H1 (cell line): ENCODE measurements at regions of chr7 and their contacts with region 1.

Region 1: GRCh38 chr7:135509903-135510602 is at the start of gene CNOT4:
- DNase-seq: peak; percentile 89
- H3K4me3 ChIP-seq: peak within 1 kb of the TSS; percentile 77 to 96 (median 92)
- H3K27ac ChIP-seq: peak within 1 kb of the TSS; percentile 96
- H3K4me1 ChIP-seq: peaks cover 0 to 2% (median 0%) of the 10 kb centered on the region in 4 experiments; a peak in 1 of 7 replicates
- H3K27me3 ChIP-seq: no peaks in the 10 kb centered on the region
- CTCF ChIP-seq: peak in 1 of 3 experiments; percentile 1; a peak in 1 of 4 replicates
- EP300 ChIP-seq: no peak; a peak in 1 of 3 replicates
- POLR2A ChIP-seq: peak; percentile 92 to 94
- RAD21 ChIP-seq: no peak
- total RNA-seq, gene CNOT4: 24.3 and 25.8 TPM in 2 replicates

Region 2: DNA sequence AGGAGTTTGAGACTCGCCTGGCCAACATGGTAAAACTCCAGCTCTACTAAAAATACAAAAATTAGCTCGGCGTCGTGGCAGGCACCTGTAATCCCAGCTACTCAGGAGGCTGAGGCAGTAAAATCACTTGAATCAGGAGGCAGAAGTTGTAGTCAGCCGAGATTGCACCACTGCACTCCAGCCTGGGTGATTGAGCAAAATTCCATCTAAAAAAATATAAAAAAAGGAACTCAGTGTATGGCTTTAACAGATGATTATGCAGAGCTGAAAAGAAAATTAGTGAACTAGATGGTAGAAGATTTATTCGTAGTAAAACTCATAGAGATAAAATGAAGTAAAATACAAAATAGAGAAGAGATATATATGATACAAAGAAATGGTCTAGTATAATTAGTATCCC is 12.5 kb after region 1 on chr7:
- CTCF ChIA-PET with region 1: interaction called, 12 read pairs
- POLR2A ChIA-PET with region 1: interaction called, 5 read pairs
- DNase-seq: no peak
- H3K4me3 ChIP-seq: no peak overlapping the region
- H3K27ac ChIP-seq: no peak overlapping the region
- H3K4me1 ChIP-seq: no peaks in the 10 kb centered on the region
- H3K27me3 ChIP-seq: no peaks in the 10 kb centered on the region
- CTCF ChIP-seq: no peak
- EP300 ChIP-seq: no peak
- POLR2A ChIP-seq: no peak
- RAD21 ChIP-seq: no peak

Region 3: DNA sequence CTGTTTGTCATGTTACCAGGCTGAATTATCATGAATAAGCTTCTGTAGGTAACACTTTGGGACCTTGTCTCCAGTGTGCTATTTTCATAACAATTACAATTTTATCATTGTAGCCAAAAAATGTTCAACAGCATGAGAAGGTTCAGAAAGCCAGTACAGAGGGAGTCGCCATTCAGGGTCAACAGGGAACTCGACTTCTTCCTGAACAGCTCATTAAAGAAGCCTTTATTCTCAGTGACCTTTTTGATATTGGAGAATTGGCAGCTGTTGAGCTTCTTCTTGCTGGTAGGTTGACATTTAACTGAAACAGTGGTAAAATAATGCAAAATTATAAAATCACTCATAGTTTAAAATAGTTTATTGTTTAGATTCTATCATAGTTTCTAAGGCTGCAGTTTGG is 63.5 kb after region 1 on chr7:
- CTCF ChIA-PET with region 1: interaction called, 10 read pairs
- POLR2A ChIA-PET with region 1: interaction called, 4 read pairs
- DNase-seq: no peak
- H3K4me3 ChIP-seq: no peak overlapping the region
- H3K27ac ChIP-seq: no peak overlapping the region
- H3K4me1 ChIP-seq: no peaks in the 10 kb centered on the region
- H3K27me3 ChIP-seq: no peaks in the 10 kb centered on the region
- CTCF ChIP-seq: no peak
- EP300 ChIP-seq: no peak
- POLR2A ChIP-seq: no peak
- RAD21 ChIP-seq: no peak